ENCODE measurements at regions of chr2 and their contacts with region 1.

Region 1: GRCh38 chr2:230219419-230220331 is at the start of gene SP110:
- DNase-seq: peak; percentile 69
- CTCF ChIP-seq: no peak

Region 2: GRCh38 chr2:230202430-230203109 is 17.1 kb before region 1 on chr2:
- CTCF ChIA-PET with region 1: interaction called, 14 read pairs
- POLR2A ChIA-PET with region 1: interaction called, 5 read pairs
- DNase-seq: peak; percentile 52
- CTCF ChIP-seq: peak; percentile 62

Region 3: DNA sequence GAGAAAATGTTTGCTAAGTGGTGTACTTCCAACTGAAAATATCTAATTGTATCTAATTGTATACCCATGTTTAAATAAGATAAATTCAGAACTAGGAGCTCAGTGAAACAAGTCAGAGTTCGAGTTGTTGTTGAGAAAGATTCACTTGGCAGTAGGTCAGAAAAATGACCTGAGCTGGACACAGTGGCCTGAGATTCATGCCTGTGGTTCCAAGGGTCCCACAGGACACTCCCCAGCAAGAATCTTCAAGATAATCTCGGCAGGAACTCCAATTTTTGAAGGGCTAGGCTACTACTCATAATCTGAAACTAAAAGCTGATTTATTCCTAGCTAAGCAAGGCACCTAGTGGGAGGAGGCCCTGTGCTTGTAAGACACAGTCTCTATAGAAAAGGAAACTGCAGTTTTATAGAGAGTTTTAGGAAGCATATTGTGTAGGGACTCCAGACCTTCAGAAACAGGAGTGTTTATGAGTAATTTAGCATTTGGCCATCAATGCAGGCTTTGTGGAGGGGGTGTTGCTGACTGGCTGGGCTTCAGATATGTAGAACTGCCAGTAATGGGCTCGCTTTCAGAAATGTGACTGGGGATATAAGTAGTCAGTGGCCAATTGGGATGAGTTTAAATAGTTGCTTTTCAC is 49.0 kb after region 1 on chr2:
- CTCF ChIA-PET with region 1: no interaction called
- POLR2A ChIA-PET with region 1: no interaction called
- DNase-seq: peak; percentile 29
- CTCF ChIP-seq: no peak

Measured in GM10248 (cell line).